ENCODE measurements at regions of chr16 and their contacts with region 1.

Region 1: DNA sequence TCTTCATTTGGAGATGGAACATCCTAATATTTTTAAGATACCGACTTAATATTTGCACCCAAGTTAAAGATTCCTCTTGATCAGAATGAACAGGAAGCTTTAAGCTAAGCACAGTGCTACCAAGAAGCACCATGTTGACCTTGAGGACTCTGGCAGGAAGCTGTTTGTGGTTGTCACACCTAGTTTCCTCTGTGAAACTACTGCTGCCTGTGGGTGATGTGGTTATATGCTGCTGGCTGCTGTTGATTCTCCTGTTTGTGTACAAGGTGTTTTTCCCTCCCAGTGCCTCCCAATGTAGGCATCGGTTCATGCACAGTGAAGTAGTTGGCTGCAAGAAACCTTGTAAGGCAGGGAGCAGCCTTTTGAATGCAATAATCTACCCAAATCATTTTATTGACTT is 23.4 kb downstream of the RBL2 start:
- DNase-seq: peak; percentile 13 to 94 (median 89)
- ATAC-seq: peak; percentile 91
- H3K4me3 ChIP-seq: peak overlapping the region; percentile 38
- H3K4me3 Mint-ChIP-seq: peak overlapping the region; percentile 80 to 93 (median 88)
- H3K27ac ChIP-seq: peak overlapping the region; percentile 65
- H3K27ac Mint-ChIP-seq: peak overlapping the region; percentile 88 to 99 (median 96)
- H3K4me1 ChIP-seq: peaks cover 79 to 81% of the 10 kb centered on the region in 2 donors
- H3K4me1 Mint-ChIP-seq: peaks cover 57 to 100% (median 89%) of the 10 kb centered on the region in 7 donors
- H3K27me3 ChIP-seq: no peaks in the 10 kb centered on the region
- H3K27me3 Mint-ChIP-seq: peaks cover 0 to 2% (median 0%) of the 10 kb centered on the region in 5 donors

Region 2: GRCh38 chr16:53198933-53199332 is 258.7 kb before region 1 on chr16:
- CTCF ChIA-PET with region 1: no interaction called
- POLR2A ChIA-PET with region 1: no interaction called
- intact Hi-C with region 1: no loop called
- DNase-seq: no peak
- ATAC-seq: no peak
- H3K4me3 ChIP-seq: no peak overlapping the region
- H3K4me3 Mint-ChIP-seq: no peak overlapping the region
- H3K27ac ChIP-seq: no peak overlapping the region
- H3K27ac Mint-ChIP-seq: no peak overlapping the region
- H3K4me1 ChIP-seq: no peaks in the 10 kb centered on the region
- H3K4me1 Mint-ChIP-seq: peaks cover 0 to 7% (median 3%) of the 10 kb centered on the region in 7 donors
- H3K27me3 ChIP-seq: no peaks in the 10 kb centered on the region
- H3K27me3 Mint-ChIP-seq: no peaks in the 10 kb centered on the region

Region 3: GRCh38 chr16:53476867-53477266 is 19.2 kb after region 1 on chr16:
- CTCF ChIA-PET with region 1: no interaction called
- POLR2A ChIA-PET with region 1: interaction called, 19 read pairs
- intact Hi-C with region 1: loop called in 1 of 2 experiments (anchors 2 kb)
- DNase-seq: no peak
- ATAC-seq: no peak
- H3K4me3 ChIP-seq: no peak overlapping the region
- H3K4me3 Mint-ChIP-seq: peak overlapping the region in 8 of 10 donors; percentile 2 to 67 (median 38)
- H3K27ac ChIP-seq: no peak overlapping the region
- H3K27ac Mint-ChIP-seq: peak overlapping the region in 8 of 9 donors; percentile 14 to 90 (median 78)
- H3K4me1 ChIP-seq: peaks cover 5 to 20% of the 10 kb centered on the region in 2 donors
- H3K4me1 Mint-ChIP-seq: peaks cover 31 to 84% (median 70%) of the 10 kb centered on the region in 7 donors
- H3K27me3 ChIP-seq: no peaks in the 10 kb centered on the region
- H3K27me3 Mint-ChIP-seq: no peaks in the 10 kb centered on the region

Region 4: DNA sequence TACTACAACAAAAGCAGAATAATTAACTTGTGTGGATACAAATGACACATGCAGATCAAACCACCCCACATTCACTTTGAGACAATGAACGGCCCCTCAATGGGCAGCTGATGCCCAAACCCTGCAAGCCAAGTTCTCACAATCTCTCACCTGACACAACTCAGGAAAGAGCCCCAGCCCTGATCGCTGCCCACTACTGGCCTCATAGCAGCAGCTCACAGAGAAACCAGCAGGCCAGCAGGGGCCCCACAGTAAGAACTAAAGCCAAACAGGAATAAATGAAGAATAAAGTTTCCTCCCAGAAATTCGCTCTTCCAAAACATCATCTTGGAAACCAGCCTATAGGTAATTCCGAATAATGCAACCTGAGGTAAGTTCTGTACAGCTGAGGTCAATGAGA is 37.7 kb after region 1 on chr16:
- CTCF ChIA-PET with region 1: no interaction called
- POLR2A ChIA-PET with region 1: interaction called, 62 read pairs
- intact Hi-C with region 1: no loop called
- DNase-seq: no peak
- ATAC-seq: no peak
- H3K4me3 ChIP-seq: no peak overlapping the region
- H3K4me3 Mint-ChIP-seq: peak overlapping the region in 1 of 10 donors; percentile 19
- H3K27ac ChIP-seq: no peak overlapping the region
- H3K27ac Mint-ChIP-seq: peak overlapping the region in 7 of 9 donors; percentile 33 to 83 (median 57)
- H3K4me1 ChIP-seq: peaks cover 5 to 15% of the 10 kb centered on the region in 2 donors
- H3K4me1 Mint-ChIP-seq: peaks cover 22 to 93% (median 61%) of the 10 kb centered on the region in 7 donors
- H3K27me3 ChIP-seq: no peaks in the 10 kb centered on the region
- H3K27me3 Mint-ChIP-seq: no peaks in the 10 kb centered on the region

Region 5: DNA sequence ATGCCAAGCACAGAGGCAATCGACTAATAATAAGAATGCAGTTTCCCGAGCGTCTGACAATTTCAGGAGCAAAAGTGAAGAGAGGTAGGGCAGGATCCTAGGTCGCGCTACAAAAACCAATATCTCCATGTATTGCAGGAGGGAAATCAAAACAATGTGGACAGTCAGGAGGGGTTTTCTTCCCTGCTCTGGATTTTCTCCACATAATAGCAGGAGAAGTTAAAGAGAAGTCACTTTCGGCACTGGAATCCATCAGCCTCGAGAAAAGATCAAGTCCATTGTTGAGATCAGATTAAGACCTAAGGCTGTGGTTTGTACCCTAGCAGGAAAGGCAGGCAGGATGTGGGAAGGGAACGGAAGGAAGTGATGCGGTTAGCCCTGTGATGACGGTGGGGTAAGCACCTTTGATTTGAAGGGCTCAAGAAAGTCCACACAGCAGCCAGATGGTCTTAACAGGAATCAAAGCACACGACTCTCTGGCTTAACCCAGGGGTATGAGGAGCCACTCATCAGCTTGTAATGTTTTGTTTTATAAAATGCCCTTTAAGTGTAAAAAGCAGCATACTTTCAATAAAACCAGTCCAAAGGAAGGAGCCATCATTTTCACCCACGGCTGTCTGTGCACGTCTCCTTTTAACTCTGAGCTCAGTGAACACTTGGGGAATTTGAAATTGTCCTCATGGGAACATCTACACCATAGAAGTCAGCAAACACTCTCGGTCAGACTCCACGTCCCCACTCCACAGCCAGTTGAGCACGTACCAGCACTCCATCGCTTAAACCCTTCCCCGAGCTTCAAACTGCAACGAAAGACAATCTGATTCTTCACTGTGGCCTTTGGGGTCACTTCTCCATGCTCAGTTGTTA is 61.1 kb after region 1 on chr16:
- CTCF ChIA-PET with region 1: no interaction called
- POLR2A ChIA-PET with region 1: interaction called, 3 read pairs
- intact Hi-C with region 1: loop called in 1 of 2 experiments (anchors 1 kb)
- DNase-seq: peak; percentile 26 to 87 (median 83)
- ATAC-seq: peak; percentile 95
- H3K4me3 ChIP-seq: peak overlapping the region; percentile 66
- H3K4me3 Mint-ChIP-seq: peak overlapping the region; percentile 70 to 90 (median 82)
- H3K27ac ChIP-seq: no peak overlapping the region
- H3K27ac Mint-ChIP-seq: peak overlapping the region in 8 of 9 donors; percentile 52 to 94 (median 86)
- H3K4me1 ChIP-seq: peaks cover 35 to 36% of the 10 kb centered on the region in 2 donors
- H3K4me1 Mint-ChIP-seq: peaks cover 38 to 63% (median 55%) of the 10 kb centered on the region in 7 donors
- H3K27me3 ChIP-seq: no peaks in the 10 kb centered on the region
- H3K27me3 Mint-ChIP-seq: peaks cover 0 to 28% (median 7%) of the 10 kb centered on the region in 5 donors